K562 (cell line): ENCODE measurements at regions of chr7 and their contacts with region 1.

Region 1: DNA sequence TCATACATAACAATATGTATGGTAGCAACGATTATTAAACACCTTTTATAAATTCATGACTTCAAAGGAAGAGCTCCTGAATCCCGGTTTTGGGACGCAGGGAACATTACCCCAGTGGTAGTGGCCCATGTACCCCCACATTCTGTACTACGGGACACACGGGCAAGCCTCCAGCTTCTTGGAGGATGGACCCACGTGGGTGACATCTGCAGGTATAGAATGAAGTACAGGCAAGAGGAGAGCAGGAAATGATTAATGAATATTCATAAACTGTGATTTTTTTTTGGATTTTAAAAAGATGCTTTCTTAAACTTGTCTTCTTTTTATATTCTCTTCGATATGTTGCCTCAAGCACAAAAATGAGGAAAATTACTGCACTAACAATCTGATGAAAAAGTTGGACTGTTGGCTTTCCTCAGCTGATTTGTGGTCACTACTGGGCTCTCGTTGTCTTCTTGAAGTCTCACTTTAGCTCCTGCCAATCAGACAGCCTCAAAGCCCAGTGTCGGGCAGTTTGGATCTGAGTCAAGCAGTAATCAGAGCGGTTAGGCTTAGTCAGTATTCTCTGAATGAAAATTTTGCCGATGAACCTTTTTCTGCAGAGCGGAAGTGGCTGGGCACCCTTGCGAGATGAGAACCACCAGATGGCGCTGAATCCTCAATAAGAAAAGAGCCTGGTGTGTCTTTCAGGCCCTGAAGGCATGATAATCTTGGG is 157.7 kb upstream of the CDCA7L start:
- DNase-seq: peak; percentile 58 to 82 (median 68)
- ATAC-seq: peak; percentile 97
- H3K4me3 ChIP-seq: no peak overlapping the region
- H3K27ac ChIP-seq: no peak overlapping the region
- H3K4me1 ChIP-seq: no peaks in the 10 kb centered on the region
- H3K27me3 ChIP-seq: peaks cover 16 to 32% of the 10 kb centered on the region in 2 experiments; a peak in 4 of 5 replicates
- CTCF ChIP-seq: peak; percentile 74 to 87 (median 78)
- EP300 ChIP-seq: no peak
- POLR2A ChIP-seq: no peak
- RAD21 ChIP-seq: peak; percentile 84 to 86

Region 2: DNA sequence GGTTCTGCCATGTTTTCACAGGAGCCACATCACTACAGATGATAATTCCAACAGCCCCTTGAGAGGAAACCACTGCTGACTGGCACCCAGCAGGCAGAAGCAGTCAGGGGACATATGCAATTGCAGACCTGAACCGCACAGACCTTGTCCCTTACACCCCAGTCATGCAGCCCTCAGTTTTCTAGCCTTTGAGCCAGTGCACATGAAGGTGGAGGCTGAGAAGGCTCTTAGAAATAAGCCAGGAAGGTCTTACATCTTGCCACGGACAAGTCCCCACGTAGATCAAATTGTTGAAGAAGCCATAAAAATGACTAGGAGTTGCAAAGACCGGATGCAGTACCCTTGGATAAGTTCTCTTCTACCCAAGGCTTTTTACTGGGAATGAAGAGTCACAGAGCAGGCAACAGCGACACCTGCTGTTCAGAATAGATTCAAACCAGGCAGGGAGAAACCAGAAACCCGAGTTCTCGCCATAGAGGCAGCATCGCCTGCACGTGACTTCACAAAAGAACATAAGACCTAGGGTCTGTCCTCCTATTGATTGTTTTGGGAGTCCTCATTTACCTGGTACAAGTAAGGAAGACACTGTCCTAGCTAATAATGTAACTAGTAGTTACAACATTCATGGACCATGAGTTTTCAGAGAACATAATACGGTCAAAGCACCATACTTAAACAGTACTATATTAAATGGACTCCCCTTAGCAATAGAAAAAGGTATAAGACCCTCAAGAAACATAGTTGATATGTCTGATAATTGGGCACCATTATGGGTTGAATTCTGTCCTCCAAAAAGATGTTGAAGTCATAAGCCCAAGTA is 385.4 kb after region 1 on chr7:
- CTCF ChIA-PET with region 1: interaction called, 29 read pairs
- POLR2A ChIA-PET with region 1: no interaction called
- in situ Hi-C with region 1: loop called (anchors 5 kb)
- intact Hi-C with region 1: loop called (anchors 2 kb)
- DNase-seq: peak; percentile 63 to 81 (median 66)
- ATAC-seq: peak; percentile 93
- H3K4me3 ChIP-seq: no peak overlapping the region
- H3K27ac ChIP-seq: no peak overlapping the region
- H3K4me1 ChIP-seq: no peaks in the 10 kb centered on the region
- H3K27me3 ChIP-seq: no peaks in the 10 kb centered on the region
- CTCF ChIP-seq: peak; percentile 84 to 93 (median 84)
- EP300 ChIP-seq: 0 out of 2 replicates have a peak, but pooled peaks have one; percentile 4
- POLR2A ChIP-seq: no peak
- RAD21 ChIP-seq: peak; percentile 95 to 97

Region 3: GRCh38 chr7:22499044-22499443 is 395.6 kb after region 1 on chr7:
- CTCF ChIA-PET with region 1: interaction called, 4 read pairs
- POLR2A ChIA-PET with region 1: no interaction called
- in situ Hi-C with region 1: no loop called
- intact Hi-C with region 1: loop called (anchors 1 kb)
- DNase-seq: peak in 1 of 4 experiments; percentile 33
- ATAC-seq: no peak
- H3K4me3 ChIP-seq: peak overlapping the region; percentile 50
- H3K27ac ChIP-seq: peak overlapping the region; percentile 79; the same call in 2 of the 3 replicates
- H3K4me1 ChIP-seq: peaks cover 2 to 4% of the 10 kb centered on the region in 2 experiments; a peak in 4 of 5 replicates
- H3K27me3 ChIP-seq: no peaks in the 10 kb centered on the region
- CTCF ChIP-seq: no peak
- EP300 ChIP-seq: no peak
- POLR2A ChIP-seq: no peak
- RAD21 ChIP-seq: no peak